GM13976 (cell line): ENCODE measurements at regions of chr14 and their contacts with region 1.

Region 1: GRCh38 chr14:68911594-68912227 is 67.4 kb downstream of the ACTN1 start:
- DNase-seq: peak; percentile 88
- CTCF ChIP-seq: peak; percentile 91

Region 2: DNA sequence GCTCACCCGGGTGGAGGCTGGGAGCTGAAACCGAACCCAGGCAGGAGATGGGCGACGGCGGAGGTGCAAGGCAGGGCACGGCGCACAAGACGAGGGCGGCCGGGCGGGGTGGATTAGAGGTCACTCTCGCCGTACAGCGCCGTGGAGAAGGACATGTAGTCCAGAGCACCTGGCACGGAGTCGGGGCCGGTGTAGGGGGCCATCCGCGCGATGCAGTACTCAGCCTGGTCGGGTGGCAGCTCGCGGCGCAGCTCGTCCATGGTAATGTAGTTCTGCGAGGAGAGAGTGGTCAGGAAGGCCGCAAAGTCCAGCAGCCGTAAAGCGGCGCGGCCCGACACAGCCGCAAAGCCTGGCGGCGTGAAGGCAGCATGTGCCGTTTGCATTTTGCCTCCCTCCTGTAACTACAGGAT is 37.0 kb before region 1 on chr14:
- in situ Hi-C with region 1: no loop called
- DNase-seq: no peak
- CTCF ChIP-seq: no peak

Region 3: DNA sequence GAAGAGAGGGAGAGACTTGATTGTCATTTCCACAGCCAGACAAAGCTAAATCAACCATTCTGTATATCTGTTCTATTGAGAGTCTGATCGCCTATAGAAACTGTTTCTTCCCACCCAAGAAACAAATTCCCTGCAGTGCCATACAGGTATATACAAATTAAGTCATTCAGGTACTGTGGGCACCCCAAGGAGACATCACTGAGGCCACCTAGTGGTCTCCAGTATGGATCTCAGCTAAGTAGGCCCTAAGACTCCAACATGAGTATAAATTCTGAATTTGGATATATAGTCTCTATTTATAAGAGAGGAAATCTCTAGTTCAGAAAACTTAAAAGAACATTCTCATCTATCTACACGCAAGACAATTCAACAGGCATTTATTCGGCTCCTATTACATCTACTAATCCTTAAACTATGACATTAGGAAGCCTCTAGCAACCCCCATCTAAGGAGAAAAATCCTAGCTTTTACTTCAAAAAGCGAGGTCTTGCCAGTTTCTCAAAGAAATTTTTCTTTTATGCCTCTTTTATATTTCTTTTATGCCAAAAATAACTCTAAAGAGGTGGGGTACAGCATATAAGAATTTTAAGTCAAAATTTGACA is 178.6 kb after region 1 on chr14:
- in situ Hi-C with region 1: loop called (anchors 10 kb)
- DNase-seq: peak; percentile 17
- CTCF ChIP-seq: peak; percentile 29